WTC11 (cell line): ENCODE measurements at regions of chr4 and their contacts with region 1.

Region 1: DNA sequence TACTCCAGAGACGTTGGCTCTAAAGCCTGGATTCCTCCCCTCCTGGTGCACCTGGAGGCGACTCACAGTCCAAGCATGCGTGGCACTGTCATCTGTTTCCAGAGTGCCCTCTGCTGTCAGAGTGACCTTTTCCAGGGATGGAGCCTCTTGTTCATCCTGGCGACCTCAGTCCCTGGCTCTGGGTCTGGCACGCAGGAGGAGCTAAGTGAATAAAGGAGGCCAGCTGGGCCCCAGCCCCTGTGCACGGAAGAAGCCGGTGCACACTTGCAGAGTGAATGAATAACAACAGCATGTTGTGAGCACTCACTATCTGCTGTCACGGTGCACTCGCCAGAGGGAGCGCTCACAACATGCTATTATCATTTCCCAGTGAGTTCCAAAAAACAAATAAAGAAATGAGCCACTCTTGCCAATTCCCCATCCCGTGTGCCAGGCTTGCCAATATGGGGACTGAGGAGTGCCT is 27.8 kb upstream of the PSAPL1 start:
- DNase-seq: no peak
- ATAC-seq: peak; percentile 46
- H3K4me3 Mint-ChIP-seq: no peak overlapping the region
- H3K27ac Mint-ChIP-seq: no peak overlapping the region
- H3K4me1 Mint-ChIP-seq: peaks cover 25% of the 10 kb centered on the region
- H3K27me3 Mint-ChIP-seq: no peaks in the 10 kb centered on the region; the same call in 1 of the 2 replicates
- CTCF ChIP-seq: no peak

Region 2: DNA sequence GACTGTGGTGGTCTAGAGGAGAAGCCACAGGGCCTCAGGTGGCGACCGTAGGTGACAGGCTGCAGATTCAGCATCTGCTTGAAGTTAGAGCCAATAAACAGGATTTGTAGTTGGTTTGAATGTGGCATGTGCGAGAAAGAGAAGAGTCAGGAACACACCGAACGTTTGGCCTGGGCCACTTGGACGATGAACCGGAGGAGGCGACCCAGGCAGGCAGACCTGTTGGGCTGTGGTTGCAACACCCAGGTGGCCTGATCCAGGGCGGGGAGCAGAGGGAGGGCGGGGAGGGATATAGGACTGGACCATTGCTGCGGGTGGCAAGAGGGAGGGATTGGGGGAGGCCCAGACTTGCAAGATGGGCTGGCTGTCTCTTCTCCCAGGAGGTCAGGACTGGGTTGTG is 17.8 kb before region 1 on chr4:
- CTCF ChIA-PET with region 1: interaction called, 10 read pairs
- POLR2A ChIA-PET with region 1: no interaction called
- DNase-seq: no peak
- ATAC-seq: no peak
- H3K4me3 Mint-ChIP-seq: no peak overlapping the region
- H3K27ac Mint-ChIP-seq: no peak overlapping the region
- H3K4me1 Mint-ChIP-seq: peaks cover 20% of the 10 kb centered on the region
- H3K27me3 Mint-ChIP-seq: peaks cover 2% of the 10 kb centered on the region
- CTCF ChIP-seq: no peak